ENCODE measurements at regions of chr17 and their contacts with region 1.

Region 1: GRCh38 chr17:28644985-28645939 is at the start of gene BLTP2:
- DNase-seq: peak; percentile 92 to 97 (median 94)
- H3K4me3 ChIP-seq: peak within 1 kb of the TSS; percentile 82
- H3K4me3 Mint-ChIP-seq: peak within 1 kb of the TSS; percentile 86 to 96 (median 93)
- H3K27ac ChIP-seq: peak within 1 kb of the TSS; percentile 90
- H3K27ac Mint-ChIP-seq: peak within 1 kb of the TSS; percentile 90 to 98 (median 98)
- H3K4me1 ChIP-seq: peaks cover 35% of the 10 kb centered on the region
- H3K4me1 Mint-ChIP-seq: peaks cover 38 to 56% (median 45%) of the 10 kb centered on the region in 3 donors
- H3K27me3 ChIP-seq: no peaks in the 10 kb centered on the region
- H3K27me3 Mint-ChIP-seq: peaks cover 0 to 2% of the 10 kb centered on the region in 2 donors
- total RNA-seq, gene BLTP2: 176 to 192 TPM

Region 2: DNA sequence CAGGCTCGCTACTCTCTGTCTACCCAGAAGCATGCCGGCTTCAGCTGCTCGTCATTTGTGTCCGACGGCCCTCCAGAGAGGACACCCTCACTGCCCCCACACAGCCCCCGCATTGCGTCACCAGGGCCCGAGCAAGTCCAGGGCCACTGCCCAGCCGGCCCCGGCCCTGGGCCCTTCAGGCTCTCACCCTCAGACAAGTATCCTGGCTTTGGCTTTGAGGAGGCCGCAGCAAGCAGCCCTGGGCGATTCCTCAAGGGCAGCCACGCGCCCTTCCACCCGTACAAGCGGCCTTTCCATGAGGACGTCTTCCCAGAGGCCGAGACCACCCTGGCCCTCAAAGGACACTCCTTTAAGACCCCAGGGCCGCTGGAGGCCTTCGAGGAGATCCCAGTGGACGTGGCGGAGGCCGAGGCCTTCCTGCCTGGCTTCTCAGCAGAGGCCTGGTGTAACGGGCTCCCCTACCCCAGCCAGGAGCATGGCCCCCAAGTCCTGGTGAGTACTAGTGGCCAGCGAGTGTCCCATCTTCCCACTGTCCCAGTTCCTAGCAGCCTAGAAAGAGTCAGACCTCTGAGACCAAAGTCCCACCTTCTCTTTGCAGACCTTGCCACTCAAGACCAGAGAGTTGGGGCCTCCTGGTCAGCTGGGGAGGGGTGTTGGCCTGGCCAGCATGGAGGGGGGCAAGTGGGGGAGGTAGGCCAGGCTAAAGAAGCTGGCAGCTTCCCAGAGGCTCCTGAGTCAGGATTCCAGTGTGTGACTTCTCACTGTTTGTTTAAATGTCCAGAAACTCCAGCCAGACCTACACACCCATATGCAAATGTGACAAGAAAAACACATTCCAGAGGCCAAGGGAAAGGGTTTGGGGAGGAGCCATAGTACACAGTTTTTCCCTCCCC is 120.5 kb before region 1 on chr17:
- CTCF ChIA-PET with region 1: no interaction called
- POLR2A ChIA-PET with region 1: no interaction called
- DNase-seq: peak in 1 of 5 donors; percentile 39
- H3K4me3 ChIP-seq: no peak overlapping the region
- H3K4me3 Mint-ChIP-seq: no peak overlapping the region
- H3K27ac ChIP-seq: no peak overlapping the region
- H3K27ac Mint-ChIP-seq: no peak overlapping the region
- H3K4me1 ChIP-seq: no peaks in the 10 kb centered on the region
- H3K4me1 Mint-ChIP-seq: peaks cover 0 to 1% (median 0%) of the 10 kb centered on the region in 3 donors
- H3K27me3 ChIP-seq: no peaks in the 10 kb centered on the region
- H3K27me3 Mint-ChIP-seq: no peaks in the 10 kb centered on the region

Region 3: GRCh38 chr17:28634206-28634856 is 10.9 kb before region 1 on chr17:
- CTCF ChIA-PET with region 1: interaction called, 11 read pairs
- POLR2A ChIA-PET with region 1: interaction called, 3 read pairs
- DNase-seq: no peak
- H3K4me3 ChIP-seq: no peak overlapping the region
- H3K4me3 Mint-ChIP-seq: no peak overlapping the region
- H3K27ac ChIP-seq: no peak overlapping the region
- H3K27ac Mint-ChIP-seq: peak overlapping the region in 1 of 8 donors; percentile 21
- H3K4me1 ChIP-seq: no peaks in the 10 kb centered on the region
- H3K4me1 Mint-ChIP-seq: peaks cover 18 to 42% (median 25%) of the 10 kb centered on the region in 3 donors
- H3K27me3 ChIP-seq: no peaks in the 10 kb centered on the region
- H3K27me3 Mint-ChIP-seq: no peaks in the 10 kb centered on the region

Region 4: DNA sequence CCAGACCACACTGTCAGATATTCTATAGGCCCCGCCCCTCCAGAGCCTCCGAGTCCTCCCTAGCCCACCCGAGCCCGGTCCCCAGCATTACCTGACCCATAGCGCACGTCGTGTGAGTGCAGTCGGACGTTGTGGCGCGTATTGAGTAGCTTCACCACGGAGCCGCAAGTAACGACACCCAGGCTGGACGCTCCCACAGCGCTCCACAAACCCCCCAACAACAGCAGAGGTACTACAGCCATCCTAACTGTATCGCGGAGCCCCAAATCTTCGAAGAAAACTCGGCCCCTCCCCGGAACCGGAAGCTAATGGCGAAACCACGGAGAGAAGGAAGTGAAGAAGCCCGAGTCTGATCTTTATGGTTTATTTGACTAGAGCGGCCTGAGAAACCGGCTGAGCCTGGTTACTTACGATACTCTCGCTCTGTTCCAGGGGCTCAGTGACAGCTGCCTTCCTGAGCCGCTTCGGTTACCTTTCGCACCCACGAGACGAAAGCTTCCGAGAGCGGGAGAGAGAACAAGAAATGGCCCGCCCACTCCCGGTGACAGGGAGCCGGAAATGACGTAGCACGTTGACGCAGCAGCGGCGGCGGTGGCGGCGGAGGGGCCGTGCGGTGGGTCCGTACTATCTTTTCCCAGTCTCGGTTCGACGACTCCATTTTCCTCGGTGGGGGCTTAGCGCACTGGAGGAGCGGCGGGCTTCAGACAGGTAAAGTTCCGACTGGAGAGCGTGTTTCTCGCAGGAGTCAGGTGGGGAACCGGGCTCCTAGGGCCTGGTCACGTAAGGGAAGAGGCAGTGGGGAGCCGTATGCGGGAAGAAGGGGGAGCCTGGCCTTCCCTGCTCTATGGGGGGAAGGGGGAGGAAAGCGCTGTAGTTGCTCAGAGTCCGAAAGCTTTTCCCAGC is 16.6 kb after region 1 on chr17 and contains the starts of genes SDF2 and SUPT6H:
- CTCF ChIA-PET with region 1: interaction called, 38 read pairs
- POLR2A ChIA-PET with region 1: interaction called, 27 read pairs
- DNase-seq: peak; percentile 90 to 97 (median 94)
- H3K4me3 ChIP-seq: peak within 1 kb of the TSS; percentile 97
- H3K4me3 Mint-ChIP-seq: peak within 1 kb of the TSS; percentile 99 to 100 (median 100)
- H3K27ac ChIP-seq: peak within 1 kb of the TSS; percentile 98
- H3K27ac Mint-ChIP-seq: peak within 1 kb of the TSS; percentile 99 to 100 (median 100)
- H3K4me1 ChIP-seq: peaks cover 49% of the 10 kb centered on the region
- H3K4me1 Mint-ChIP-seq: peaks cover 50 to 70% (median 62%) of the 10 kb centered on the region in 3 donors
- H3K27me3 ChIP-seq: no peaks in the 10 kb centered on the region
- H3K27me3 Mint-ChIP-seq: no peaks in the 10 kb centered on the region
- total RNA-seq, gene SDF2: 51.4 to 55.1 TPM
- total RNA-seq, gene SUPT6H: 80.0 to 88.4 TPM

Region 5: GRCh38 chr17:28698253-28698941 is 53.1 kb after region 1 on chr17:
- CTCF ChIA-PET with region 1: no interaction called
- POLR2A ChIA-PET with region 1: no interaction called
- DNase-seq: no peak
- H3K4me3 ChIP-seq: no peak overlapping the region
- H3K4me3 Mint-ChIP-seq: no peak overlapping the region
- H3K27ac ChIP-seq: no peak overlapping the region
- H3K27ac Mint-ChIP-seq: peak overlapping the region in 1 of 8 donors; percentile 47
- H3K4me1 ChIP-seq: no peaks in the 10 kb centered on the region
- H3K4me1 Mint-ChIP-seq: no peaks in the 10 kb centered on the region
- H3K27me3 ChIP-seq: no peaks in the 10 kb centered on the region
- H3K27me3 Mint-ChIP-seq: no peaks in the 10 kb centered on the region